ENCODE measurements at regions of chr3 and their contacts with region 1.

Region 1: GRCh38 chr3:71583566-71584449 is at the start of gene FOXP1:
- DNase-seq: peak; percentile 41 to 90 (median 63)
- ATAC-seq: peak; percentile 53
- H3K4me3 ChIP-seq: peak within 1 kb of the TSS; percentile 73 to 75
- H3K4me3 Mint-ChIP-seq: peak within 1 kb of the TSS; percentile 94
- H3K27ac ChIP-seq: peak within 1 kb of the TSS; percentile 67 to 84
- H3K27ac Mint-ChIP-seq: peak within 1 kb of the TSS; percentile 97
- H3K4me1 ChIP-seq: peaks cover 14% of the 10 kb centered on the region
- H3K4me1 Mint-ChIP-seq: peaks cover 47% of the 10 kb centered on the region
- H3K27me3 ChIP-seq: no peaks in the 10 kb centered on the region
- H3K27me3 Mint-ChIP-seq: no peaks in the 10 kb centered on the region
- CTCF ChIP-seq: no peak
- total RNA-seq, gene FOXP1: 411 to 413 TPM

Region 2: DNA sequence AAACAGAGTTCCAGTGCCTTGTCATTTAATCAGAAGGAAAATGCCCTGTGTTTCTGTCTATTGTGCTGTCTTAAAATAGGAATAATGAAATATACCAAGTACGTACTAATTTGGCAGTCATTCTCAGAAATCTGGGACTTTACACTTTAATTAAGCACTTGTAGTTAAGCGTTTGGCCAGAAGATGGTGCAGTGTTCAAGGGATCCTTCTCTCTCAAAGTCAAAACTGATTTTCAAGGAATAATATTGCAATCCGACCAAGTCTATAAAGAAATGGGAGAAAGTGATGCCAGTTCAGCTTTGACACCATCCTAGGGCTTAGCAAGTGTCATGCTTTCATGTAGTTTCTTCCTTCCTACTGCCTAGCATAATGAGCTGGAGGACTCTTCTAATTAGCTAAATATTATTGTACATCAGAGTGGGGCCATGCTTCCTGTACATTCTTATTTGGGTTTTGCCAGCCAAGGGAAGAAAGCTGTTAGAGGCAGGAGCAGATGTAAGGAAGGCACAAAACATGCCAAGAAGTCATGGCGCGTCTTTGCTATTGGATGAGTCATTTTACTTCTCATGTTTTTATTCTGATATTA is 1519.5 kb before region 1 on chr3:
- CTCF ChIA-PET with region 1: interaction called, 3 read pairs
- POLR2A ChIA-PET with region 1: no interaction called
- intact Hi-C with region 1: loop called in 1 of 2 experiments (anchors 1 kb)
- DNase-seq: peak in 3 of 9 experiments; percentile 5 to 31 (median 17)
- ATAC-seq: no peak
- H3K4me3 ChIP-seq: no peak overlapping the region
- H3K4me3 Mint-ChIP-seq: no peak overlapping the region
- H3K27ac ChIP-seq: no peak overlapping the region
- H3K27ac Mint-ChIP-seq: no peak overlapping the region
- H3K4me1 ChIP-seq: no peaks in the 10 kb centered on the region
- H3K4me1 Mint-ChIP-seq: no peaks in the 10 kb centered on the region
- H3K27me3 ChIP-seq: no peaks in the 10 kb centered on the region
- H3K27me3 Mint-ChIP-seq: peaks cover 2% of the 10 kb centered on the region
- CTCF ChIP-seq: peak; percentile 48

Region 3: GRCh38 chr3:70716832-70717231 is 867.0 kb before region 1 on chr3:
- CTCF ChIA-PET with region 1: interaction called, 3 read pairs
- POLR2A ChIA-PET with region 1: no interaction called
- intact Hi-C with region 1: loop called in 1 of 2 experiments (anchors 5 kb)
- DNase-seq: peak in 2 of 9 experiments; percentile 2 to 21
- ATAC-seq: no peak
- H3K4me3 ChIP-seq: no peak overlapping the region
- H3K4me3 Mint-ChIP-seq: no peak overlapping the region
- H3K27ac ChIP-seq: no peak overlapping the region
- H3K27ac Mint-ChIP-seq: no peak overlapping the region
- H3K4me1 ChIP-seq: no peaks in the 10 kb centered on the region
- H3K4me1 Mint-ChIP-seq: no peaks in the 10 kb centered on the region
- H3K27me3 ChIP-seq: no peaks in the 10 kb centered on the region
- H3K27me3 Mint-ChIP-seq: no peaks in the 10 kb centered on the region
- CTCF ChIP-seq: no peak

Region 4: GRCh38 chr3:71069797-71070196 is 514.0 kb before region 1 on chr3:
- CTCF ChIA-PET with region 1: interaction called, 5 read pairs
- POLR2A ChIA-PET with region 1: no interaction called
- intact Hi-C with region 1: loop called (anchors 5 kb)
- DNase-seq: peak; percentile 57 to 81 (median 72)
- ATAC-seq: peak; percentile 29
- H3K4me3 ChIP-seq: no peak overlapping the region
- H3K4me3 Mint-ChIP-seq: no peak overlapping the region
- H3K27ac ChIP-seq: no peak overlapping the region
- H3K27ac Mint-ChIP-seq: peak overlapping the region; percentile 91
- H3K4me1 ChIP-seq: peaks cover 89% of the 10 kb centered on the region
- H3K4me1 Mint-ChIP-seq: peaks cover 84% of the 10 kb centered on the region
- H3K27me3 ChIP-seq: no peaks in the 10 kb centered on the region
- H3K27me3 Mint-ChIP-seq: no peaks in the 10 kb centered on the region
- CTCF ChIP-seq: peak; percentile 67

Region 5: GRCh38 chr3:71305231-71306206 is 278.3 kb before region 1 on chr3:
- CTCF ChIA-PET with region 1: no interaction called
- POLR2A ChIA-PET with region 1: no interaction called
- intact Hi-C with region 1: loop called (anchors 2 to 5 kb)
- DNase-seq: peak in 4 of 9 experiments; percentile 19 to 48 (median 33)
- ATAC-seq: peak; percentile 29
- H3K4me3 ChIP-seq: peak overlapping the region; percentile 47 to 56
- H3K4me3 Mint-ChIP-seq: peak overlapping the region; percentile 89
- H3K27ac ChIP-seq: peak overlapping the region; percentile 57 to 80
- H3K27ac Mint-ChIP-seq: peak overlapping the region; percentile 96
- H3K4me1 ChIP-seq: peaks cover 71% of the 10 kb centered on the region
- H3K4me1 Mint-ChIP-seq: peaks cover 85% of the 10 kb centered on the region
- H3K27me3 ChIP-seq: no peaks in the 10 kb centered on the region
- H3K27me3 Mint-ChIP-seq: no peaks in the 10 kb centered on the region
- CTCF ChIP-seq: no peak

Region 6: GRCh38 chr3:71495708-71496472 is 87.9 kb before region 1 on chr3:
- CTCF ChIA-PET with region 1: no interaction called
- POLR2A ChIA-PET with region 1: interaction called, 7 read pairs
- intact Hi-C with region 1: loop called in 1 of 2 experiments (anchors 5 kb)
- DNase-seq: peak in 2 of 9 experiments; percentile 48 to 69
- ATAC-seq: no peak
- H3K4me3 ChIP-seq: peak overlapping the region; percentile 38 to 39
- H3K4me3 Mint-ChIP-seq: peak overlapping the region; percentile 76
- H3K27ac ChIP-seq: peak overlapping the region; percentile 46 to 80
- H3K27ac Mint-ChIP-seq: peak overlapping the region; percentile 94
- H3K4me1 ChIP-seq: peaks cover 65% of the 10 kb centered on the region
- H3K4me1 Mint-ChIP-seq: peaks cover 83% of the 10 kb centered on the region
- H3K27me3 ChIP-seq: no peaks in the 10 kb centered on the region
- H3K27me3 Mint-ChIP-seq: no peaks in the 10 kb centered on the region
- CTCF ChIP-seq: no peak

Region 7: DNA sequence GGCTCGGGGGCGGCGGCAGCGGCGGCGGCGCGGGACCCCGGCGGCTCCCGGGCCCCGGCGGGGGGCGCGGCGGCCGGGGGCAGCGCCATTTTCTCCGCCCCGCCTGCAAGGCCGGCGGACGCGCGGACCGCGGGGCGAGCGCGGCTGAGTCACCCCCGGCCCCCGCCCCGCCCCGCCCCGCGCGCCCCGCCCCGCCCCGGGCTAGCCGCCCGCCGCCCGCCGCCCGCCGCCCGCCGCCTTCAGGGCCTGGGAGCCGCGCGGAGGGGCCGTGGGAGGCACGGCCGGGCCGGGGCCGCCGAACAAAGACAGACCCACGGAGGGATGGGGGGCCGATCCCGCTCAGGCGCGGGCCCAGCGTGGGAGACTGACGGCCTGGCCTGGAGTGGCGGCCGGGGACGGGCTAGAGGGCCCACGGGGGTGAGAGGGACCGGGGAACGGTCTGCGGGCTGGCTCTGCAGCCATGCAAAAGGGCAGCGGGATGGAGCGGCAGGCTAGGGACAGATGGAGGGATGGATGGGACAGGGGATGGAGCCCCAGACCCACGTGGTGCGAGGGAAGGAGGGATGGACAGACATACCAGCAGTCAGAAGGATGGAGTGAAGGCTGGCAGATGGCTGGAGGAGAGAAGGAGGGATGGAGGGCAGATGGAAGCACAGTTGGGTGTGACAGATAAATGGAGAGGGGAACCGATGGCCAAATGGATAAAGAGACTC is 141.6 kb after region 1 on chr3 and contains the start of gene EIF4E3:
- CTCF ChIA-PET with region 1: no interaction called
- POLR2A ChIA-PET with region 1: no interaction called
- intact Hi-C with region 1: loop called in 1 of 2 experiments (anchors 5 kb)
- DNase-seq: peak in 8 of 9 experiments; percentile 26 to 79 (median 42)
- ATAC-seq: peak; percentile 28
- H3K4me3 ChIP-seq: peak within 1 kb of the TSS; percentile 74 to 89
- H3K4me3 Mint-ChIP-seq: peak within 1 kb of the TSS; percentile 92
- H3K27ac ChIP-seq: peak within 1 kb of the TSS; percentile 54 to 80
- H3K27ac Mint-ChIP-seq: peak within 1 kb of the TSS; percentile 97
- H3K4me1 ChIP-seq: peaks cover 59% of the 10 kb centered on the region
- H3K4me1 Mint-ChIP-seq: peaks cover 73% of the 10 kb centered on the region
- H3K27me3 ChIP-seq: no peaks in the 10 kb centered on the region
- H3K27me3 Mint-ChIP-seq: no peaks in the 10 kb centered on the region
- CTCF ChIP-seq: no peak
- total RNA-seq, gene EIF4E3: 33.0 to 34.5 TPM

Region 8: DNA sequence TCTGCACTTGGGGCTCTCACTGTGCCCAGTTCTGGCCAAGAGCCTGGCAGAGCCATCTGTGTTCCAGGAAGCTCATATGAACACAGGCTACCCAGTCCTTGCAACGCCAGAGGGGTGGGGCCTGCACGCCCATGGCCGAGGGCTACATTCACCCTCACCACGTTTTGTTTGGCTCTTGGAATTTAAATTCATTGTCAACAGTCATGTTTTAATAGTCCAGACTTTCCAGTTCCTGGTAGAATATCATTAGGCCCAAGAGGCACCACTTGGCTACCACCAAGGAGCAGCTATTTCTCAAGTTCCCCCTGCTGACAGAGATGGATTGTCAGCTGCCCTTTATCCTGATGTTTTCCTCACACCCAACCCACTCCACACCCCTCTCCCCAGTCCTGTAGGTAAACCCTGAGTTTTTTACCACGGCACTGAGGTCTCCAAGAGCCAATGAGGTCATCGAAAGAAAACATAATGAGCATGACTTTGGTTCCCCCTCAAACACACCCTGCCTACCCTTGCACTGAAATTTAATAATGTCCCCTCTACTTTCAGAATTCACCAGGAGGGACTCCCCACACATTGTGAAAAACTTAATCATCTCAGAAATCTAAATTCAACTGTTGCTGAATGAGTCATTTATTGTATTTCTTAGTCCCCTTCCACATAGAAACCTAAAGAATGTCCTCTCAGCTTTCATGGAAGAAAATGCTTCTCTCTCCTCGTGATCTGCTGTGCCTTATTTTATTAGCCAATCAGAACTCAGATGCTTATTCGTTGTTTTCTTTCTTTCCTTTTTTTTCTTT is 1139.3 kb after region 1 on chr3:
- CTCF ChIA-PET with region 1: no interaction called
- POLR2A ChIA-PET with region 1: no interaction called
- intact Hi-C with region 1: no loop called
- DNase-seq: no peak
- ATAC-seq: no peak
- H3K4me3 ChIP-seq: no peak overlapping the region
- H3K4me3 Mint-ChIP-seq: no peak overlapping the region
- H3K27ac ChIP-seq: no peak overlapping the region
- H3K27ac Mint-ChIP-seq: no peak overlapping the region
- H3K4me1 ChIP-seq: no peaks in the 10 kb centered on the region
- H3K4me1 Mint-ChIP-seq: no peaks in the 10 kb centered on the region
- H3K27me3 ChIP-seq: no peaks in the 10 kb centered on the region
- H3K27me3 Mint-ChIP-seq: no peaks in the 10 kb centered on the region
- CTCF ChIP-seq: no peak

Measured in CD8-positive, alpha-beta T cell (primary cell).